CD4-positive, alpha-beta memory T cell (primary cell): ENCODE measurements at regions of chr10 and their contacts with region 1.

Region 1: DNA sequence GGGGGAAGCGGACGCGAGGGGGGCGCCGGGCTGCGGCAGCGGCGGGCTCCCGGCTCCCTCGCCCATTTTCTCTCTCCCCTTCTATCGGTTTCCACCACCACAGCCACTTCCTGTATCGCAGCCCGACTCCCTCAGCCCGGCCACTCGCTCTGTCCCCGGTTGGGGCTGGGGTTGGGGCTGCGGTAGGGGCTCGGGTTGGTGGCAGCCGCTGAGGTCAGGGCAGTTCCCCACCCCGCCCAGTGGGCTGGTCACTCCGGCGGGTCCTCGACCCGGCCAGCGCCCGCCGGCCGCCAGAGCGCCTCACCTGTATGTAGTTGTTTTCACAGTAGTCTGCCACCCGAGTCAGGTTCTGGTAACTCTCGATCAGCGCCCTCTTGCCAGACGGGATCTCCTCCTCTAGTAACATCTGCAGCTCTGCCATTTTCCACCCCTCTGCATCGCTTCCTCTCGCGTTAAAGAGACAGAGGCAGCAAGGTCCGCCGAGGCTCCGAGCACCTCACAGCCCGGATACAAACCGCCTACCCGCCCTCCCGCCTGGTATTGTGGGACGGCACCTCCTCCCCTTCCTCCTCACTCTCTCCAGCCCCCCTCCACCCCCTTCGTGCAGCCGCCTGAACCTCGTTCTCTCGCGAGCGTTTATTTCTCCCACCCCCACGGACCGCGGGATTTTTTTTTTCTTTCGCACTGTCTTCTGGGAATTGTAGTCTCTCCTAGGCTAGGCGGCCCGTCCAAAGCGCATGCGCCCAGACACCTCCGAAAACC is at the start of gene ABI1:
- DNase-seq: peak; percentile 99
- H3K4me3 ChIP-seq: peak within 1 kb of the TSS; percentile 87 to 100
- H3K4me3 Mint-ChIP-seq: peak within 1 kb of the TSS; percentile 95 to 100 (median 98)
- H3K27ac ChIP-seq: peak within 1 kb of the TSS; percentile 97
- H3K27ac Mint-ChIP-seq: peak within 1 kb of the TSS; percentile 96 to 100 (median 98)
- H3K4me1 ChIP-seq: peaks cover 45% of the 10 kb centered on the region
- H3K4me1 Mint-ChIP-seq: peaks cover 21 to 51% (median 35%) of the 10 kb centered on the region in 4 donors
- H3K27me3 ChIP-seq: peaks cover 4% of the 10 kb centered on the region
- H3K27me3 Mint-ChIP-seq: peaks cover 3% of the 10 kb centered on the region in 2 donors
- total RNA-seq, gene ABI1: 62.2 to 62.5 TPM

Region 2: GRCh38 chr10:26334932-26335573 is 525.6 kb before region 1 on chr10:
- CTCF ChIA-PET with region 1: no interaction called
- POLR2A ChIA-PET with region 1: no interaction called
- intact Hi-C with region 1: loop called (anchors 5 kb)
- DNase-seq: peak; percentile 66 to 74 (median 72)
- H3K4me3 ChIP-seq: peak overlapping the region; percentile 38 to 53
- H3K4me3 Mint-ChIP-seq: peak overlapping the region; percentile 76 to 93 (median 84)
- H3K27ac ChIP-seq: peak overlapping the region; percentile 5
- H3K27ac Mint-ChIP-seq: peak overlapping the region in 2 of 7 donors; percentile 61 to 79
- H3K4me1 ChIP-seq: peaks cover 4% of the 10 kb centered on the region
- H3K4me1 Mint-ChIP-seq: peaks cover 4 to 8% (median 6%) of the 10 kb centered on the region in 4 donors
- H3K27me3 ChIP-seq: no peaks in the 10 kb centered on the region
- H3K27me3 Mint-ChIP-seq: peaks cover 0 to 2% of the 10 kb centered on the region in 2 donors

Region 3: GRCh38 chr10:26430641-26431164 is 429.9 kb before region 1 on chr10:
- CTCF ChIA-PET with region 1: no interaction called
- POLR2A ChIA-PET with region 1: no interaction called
- intact Hi-C with region 1: no loop called
- DNase-seq: peak; percentile 28 to 55 (median 39)
- H3K4me3 ChIP-seq: no peak overlapping the region
- H3K4me3 Mint-ChIP-seq: peak overlapping the region; percentile 43 to 81 (median 68)
- H3K27ac ChIP-seq: no peak overlapping the region
- H3K27ac Mint-ChIP-seq: peak overlapping the region; percentile 57 to 86 (median 75)
- H3K4me1 ChIP-seq: peaks cover 15% of the 10 kb centered on the region
- H3K4me1 Mint-ChIP-seq: peaks cover 17 to 35% (median 23%) of the 10 kb centered on the region in 4 donors
- H3K27me3 ChIP-seq: no peaks in the 10 kb centered on the region
- H3K27me3 Mint-ChIP-seq: no peaks in the 10 kb centered on the region

Region 4: GRCh38 chr10:26697163-26697921 is 163.3 kb before region 1 on chr10 and contains the start of gene PDSS1:
- CTCF ChIA-PET with region 1: no interaction called
- POLR2A ChIA-PET with region 1: interaction called, 6 read pairs
- intact Hi-C with region 1: loop called (anchors 1 kb)
- DNase-seq: peak; percentile 53 to 72 (median 56)
- H3K4me3 ChIP-seq: peak within 1 kb of the TSS; percentile 37 to 81
- H3K4me3 Mint-ChIP-seq: peak within 1 kb of the TSS; percentile 86 to 98 (median 97)
- H3K27ac ChIP-seq: peak within 1 kb of the TSS; percentile 50
- H3K27ac Mint-ChIP-seq: peak within 1 kb of the TSS; percentile 88 to 96 (median 95)
- H3K4me1 ChIP-seq: peaks cover 16% of the 10 kb centered on the region
- H3K4me1 Mint-ChIP-seq: peaks cover 19 to 32% (median 28%) of the 10 kb centered on the region in 4 donors
- H3K27me3 ChIP-seq: no peaks in the 10 kb centered on the region
- H3K27me3 Mint-ChIP-seq: no peaks in the 10 kb centered on the region
- total RNA-seq, gene PDSS1: 3.1 to 3.3 TPM

Region 5: GRCh38 chr10:26821699-26822570 is 38.7 kb before region 1 on chr10:
- CTCF ChIA-PET with region 1: no interaction called
- POLR2A ChIA-PET with region 1: no interaction called
- intact Hi-C with region 1: loop called (anchors 5 kb)
- DNase-seq: no peak
- H3K4me3 ChIP-seq: no peak overlapping the region
- H3K4me3 Mint-ChIP-seq: no peak overlapping the region
- H3K27ac ChIP-seq: no peak overlapping the region
- H3K27ac Mint-ChIP-seq: peak overlapping the region in 1 of 7 donors; percentile 48
- H3K4me1 ChIP-seq: peaks cover 58% of the 10 kb centered on the region
- H3K4me1 Mint-ChIP-seq: peaks cover 50 to 74% (median 58%) of the 10 kb centered on the region in 4 donors
- H3K27me3 ChIP-seq: no peaks in the 10 kb centered on the region
- H3K27me3 Mint-ChIP-seq: no peaks in the 10 kb centered on the region

Region 6: GRCh38 chr10:26881600-26882331 is 21.1 kb after region 1 on chr10:
- CTCF ChIA-PET with region 1: interaction called, 14 read pairs
- POLR2A ChIA-PET with region 1: no interaction called
- intact Hi-C with region 1: loop called (anchors 1 kb)
- DNase-seq: peak in 4 of 5 donors; percentile 34 to 56 (median 43)
- H3K4me3 ChIP-seq: no peak overlapping the region
- H3K4me3 Mint-ChIP-seq: no peak overlapping the region
- H3K27ac ChIP-seq: no peak overlapping the region
- H3K27ac Mint-ChIP-seq: no peak overlapping the region
- H3K4me1 ChIP-seq: no peaks in the 10 kb centered on the region
- H3K4me1 Mint-ChIP-seq: peaks cover 0 to 5% (median 1%) of the 10 kb centered on the region in 4 donors
- H3K27me3 ChIP-seq: no peaks in the 10 kb centered on the region
- H3K27me3 Mint-ChIP-seq: peaks cover 7 to 9% of the 10 kb centered on the region in 2 donors

Region 7: GRCh38 chr10:27155066-27155754 is 294.6 kb after region 1 on chr10 and contains the start of gene MASTL:
- CTCF ChIA-PET with region 1: interaction called, 3 read pairs
- POLR2A ChIA-PET with region 1: interaction called, 10 read pairs
- intact Hi-C with region 1: loop called (anchors 1 kb)
- DNase-seq: peak; percentile 94 to 97 (median 96)
- H3K4me3 ChIP-seq: peak within 1 kb of the TSS; percentile 82 to 100
- H3K4me3 Mint-ChIP-seq: peak within 1 kb of the TSS; percentile 95 to 100 (median 98)
- H3K27ac ChIP-seq: peak within 1 kb of the TSS; percentile 100
- H3K27ac Mint-ChIP-seq: peak within 1 kb of the TSS; percentile 100
- H3K4me1 ChIP-seq: peaks cover 40% of the 10 kb centered on the region
- H3K4me1 Mint-ChIP-seq: peaks cover 25 to 67% (median 45%) of the 10 kb centered on the region in 4 donors
- H3K27me3 ChIP-seq: no peaks in the 10 kb centered on the region
- H3K27me3 Mint-ChIP-seq: no peaks in the 10 kb centered on the region
- total RNA-seq, gene MASTL: 7.0 to 7.9 TPM

Region 8: DNA sequence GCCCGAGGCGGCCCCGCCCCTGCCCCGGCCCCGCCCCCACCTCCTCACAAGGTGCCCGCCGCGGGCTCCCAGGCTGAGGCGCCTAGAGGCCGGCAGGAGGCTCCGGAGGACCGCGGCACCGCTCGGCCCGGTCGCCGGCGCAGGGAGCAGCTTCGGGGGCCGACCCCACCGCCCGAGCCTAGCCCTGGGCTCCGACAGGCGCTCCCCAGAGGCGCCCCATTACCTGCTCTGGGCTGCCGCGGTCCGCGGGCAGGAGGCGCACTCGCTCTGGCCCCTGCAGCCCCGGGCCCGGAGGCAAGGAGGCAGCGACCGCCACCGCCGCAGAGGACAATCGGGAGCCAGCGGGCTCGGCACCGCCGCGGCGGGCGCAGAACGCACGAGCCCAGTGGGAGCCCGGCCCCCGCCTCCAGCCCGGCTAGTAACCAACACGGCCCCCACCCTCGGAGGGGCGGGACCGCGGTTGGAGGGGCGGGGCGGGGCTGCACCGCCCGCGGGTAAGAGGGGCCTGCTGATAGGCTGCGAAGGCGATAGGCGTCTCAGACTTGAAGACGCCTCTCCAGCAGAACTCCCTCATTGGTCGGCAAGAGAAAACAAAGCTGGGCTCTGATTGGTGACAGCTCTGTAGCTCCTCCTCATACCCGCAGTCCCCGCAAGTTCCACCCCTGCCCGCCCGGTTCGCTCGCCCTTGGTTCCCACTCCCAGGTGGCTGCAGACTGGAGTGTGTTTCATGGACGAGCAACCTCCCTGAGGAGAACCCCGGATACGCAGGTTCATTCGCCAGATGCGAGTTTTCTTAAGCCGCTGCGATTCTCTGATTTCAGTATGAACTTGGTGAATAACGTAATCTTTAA is 1442.2 kb after region 1 on chr10 and contains the start of gene MPP7:
- CTCF ChIA-PET with region 1: no interaction called
- POLR2A ChIA-PET with region 1: no interaction called
- intact Hi-C with region 1: loop called (anchors 2 kb)
- DNase-seq: peak; percentile 96 to 98 (median 97)
- H3K4me3 ChIP-seq: peak within 1 kb of the TSS; percentile 82 to 93
- H3K4me3 Mint-ChIP-seq: peak within 1 kb of the TSS; percentile 88 to 97 (median 94)
- H3K27ac ChIP-seq: peak within 1 kb of the TSS; percentile 51
- H3K27ac Mint-ChIP-seq: peak within 1 kb of the TSS; percentile 87 to 95 (median 93)
- H3K4me1 ChIP-seq: peaks cover 48% of the 10 kb centered on the region
- H3K4me1 Mint-ChIP-seq: peaks cover 44 to 76% (median 57%) of the 10 kb centered on the region in 4 donors
- H3K27me3 ChIP-seq: no peaks in the 10 kb centered on the region
- H3K27me3 Mint-ChIP-seq: no peaks in the 10 kb centered on the region
- total RNA-seq, gene MPP7: 24.9 to 28.1 TPM